ENCODE measurements at regions of chr4 and their contacts with region 1.

Region 1: DNA sequence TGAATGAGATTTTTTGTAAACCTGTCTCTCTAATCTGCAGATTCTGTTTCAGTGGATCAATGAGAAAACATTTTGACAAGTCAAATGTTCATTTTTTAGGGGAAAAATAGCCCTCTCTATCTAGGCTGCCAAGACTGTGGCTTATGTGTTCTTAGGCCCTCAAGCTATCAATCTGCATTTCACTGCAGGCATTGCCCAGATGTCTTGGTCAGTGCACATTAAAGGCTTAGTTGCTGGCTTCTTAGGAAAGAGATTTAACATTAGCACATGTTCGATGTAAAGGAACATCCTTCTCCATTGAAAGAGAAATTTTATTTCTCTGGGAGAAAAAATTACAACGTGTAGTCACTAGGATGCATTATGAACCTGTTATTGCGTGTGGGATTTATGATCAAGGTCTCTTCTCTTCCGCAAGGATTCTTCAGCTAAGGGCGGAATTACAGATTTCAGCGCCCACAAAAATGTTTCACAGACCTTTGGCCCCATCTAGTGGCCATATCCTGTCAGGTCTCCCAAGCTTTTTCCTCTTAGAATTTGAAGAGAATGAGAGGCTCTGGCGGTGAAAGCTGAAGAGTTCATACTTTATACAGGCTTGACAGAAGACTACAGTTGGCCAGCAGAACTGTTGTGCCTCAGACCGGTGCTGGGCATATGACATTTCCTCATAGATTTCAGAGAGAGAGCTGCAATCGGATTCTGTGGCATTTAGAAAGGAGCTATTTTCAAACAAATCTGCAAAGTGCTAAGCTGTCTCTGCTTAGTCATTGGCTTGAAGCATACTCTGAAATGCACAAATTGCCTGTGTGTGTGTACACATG is 144.6 kb upstream of the NOCT start:
- DNase-seq: peak; percentile 41 to 84
- H3K4me3 ChIP-seq: no peak overlapping the region
- H3K27ac ChIP-seq: no peak overlapping the region
- H3K4me1 ChIP-seq: peaks cover 0 to 3% (median under 1%) of the 10 kb centered on the region in 4 experiments; a peak in 4 of 7 replicates
- H3K27me3 ChIP-seq: no peaks in the 10 kb centered on the region
- CTCF ChIP-seq: peak in 2 of 3 experiments; percentile 70 to 85; a peak in 3 of 4 replicates
- EP300 ChIP-seq: no peak
- POLR2A ChIP-seq: no peak
- RAD21 ChIP-seq: peak; percentile 93 to 97

Region 2: GRCh38 chr4:138686106-138686835 is 184.7 kb before region 1 on chr4:
- CTCF ChIA-PET with region 1: interaction called, 58 read pairs
- POLR2A ChIA-PET with region 1: no interaction called
- DNase-seq: no peak
- H3K4me3 ChIP-seq: no peak overlapping the region
- H3K27ac ChIP-seq: no peak overlapping the region
- H3K4me1 ChIP-seq: peaks cover 5 to 7% (median 6%) of the 10 kb centered on the region in 4 experiments
- H3K27me3 ChIP-seq: no peaks in the 10 kb centered on the region
- CTCF ChIP-seq: no peak
- EP300 ChIP-seq: no peak
- POLR2A ChIP-seq: no peak
- RAD21 ChIP-seq: no peak; a peak in 1 of 4 replicates

Region 3: DNA sequence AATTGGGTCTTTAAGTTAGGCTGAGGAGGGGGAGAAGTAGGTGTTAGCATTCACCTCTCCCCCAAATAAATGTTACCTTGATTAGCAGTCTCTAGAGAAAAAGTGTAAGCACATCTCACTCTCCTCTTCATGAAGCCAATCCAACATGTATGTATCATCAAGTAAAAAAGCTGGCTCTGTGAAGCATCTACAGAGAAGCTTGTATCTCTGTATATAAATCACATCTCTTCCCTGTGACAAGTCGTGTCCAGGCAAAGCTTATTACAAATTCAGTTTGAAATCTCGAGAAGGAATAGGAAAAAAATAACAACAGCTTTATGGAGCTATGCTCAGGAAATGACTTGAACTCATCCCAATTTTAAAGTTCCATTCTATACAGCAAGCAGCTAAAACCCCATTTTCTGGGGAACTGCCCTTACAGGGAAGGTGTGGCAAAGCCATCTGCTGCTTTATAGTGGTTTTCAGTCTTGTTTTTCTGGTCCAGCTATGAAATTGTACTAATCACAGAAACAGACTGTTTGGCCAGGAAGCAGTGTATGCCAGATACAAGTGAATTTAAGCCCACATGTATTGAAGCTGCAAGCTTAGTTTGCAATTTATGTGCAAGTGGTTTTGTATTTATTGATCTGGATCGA is 168.6 kb before region 1 on chr4:
- CTCF ChIA-PET with region 1: interaction called, 11 read pairs
- POLR2A ChIA-PET with region 1: no interaction called
- DNase-seq: no peak
- H3K4me3 ChIP-seq: no peak overlapping the region
- H3K27ac ChIP-seq: no peak overlapping the region
- H3K4me1 ChIP-seq: peaks cover 0 to 3% (median 1%) of the 10 kb centered on the region in 4 experiments; a peak in 2 of 7 replicates
- H3K27me3 ChIP-seq: no peaks in the 10 kb centered on the region
- CTCF ChIP-seq: no peak
- EP300 ChIP-seq: no peak
- POLR2A ChIP-seq: no peak
- RAD21 ChIP-seq: no peak

Region 4: GRCh38 chr4:138890871-138891570 is 20.1 kb after region 1 on chr4:
- CTCF ChIA-PET with region 1: interaction called, 11 read pairs
- POLR2A ChIA-PET with region 1: no interaction called
- DNase-seq: no peak
- H3K4me3 ChIP-seq: no peak overlapping the region
- H3K27ac ChIP-seq: no peak overlapping the region
- H3K4me1 ChIP-seq: peaks cover 3 to 13% (median 9%) of the 10 kb centered on the region in 4 experiments; a peak in 5 of 7 replicates
- H3K27me3 ChIP-seq: no peaks in the 10 kb centered on the region
- CTCF ChIP-seq: no peak
- EP300 ChIP-seq: no peak
- POLR2A ChIP-seq: no peak
- RAD21 ChIP-seq: no peak

Region 5: GRCh38 chr4:138919094-138919936 is 48.4 kb after region 1 on chr4:
- CTCF ChIA-PET with region 1: interaction called, 27 read pairs
- POLR2A ChIA-PET with region 1: no interaction called
- DNase-seq: peak in 1 of 2 experiments; percentile 86
- H3K4me3 ChIP-seq: no peak overlapping the region
- H3K27ac ChIP-seq: no peak overlapping the region
- H3K4me1 ChIP-seq: peaks cover 0 to 3% (median 0%) of the 10 kb centered on the region in 4 experiments; a peak in 1 of 7 replicates
- H3K27me3 ChIP-seq: no peaks in the 10 kb centered on the region
- CTCF ChIP-seq: peak; percentile 80 to 91 (median 81)
- EP300 ChIP-seq: no peak
- POLR2A ChIP-seq: no peak
- RAD21 ChIP-seq: peak; percentile 94 to 98

Measured in H1 (cell line).